HepG2 (cell line): ENCODE measurements at regions of chr11 and their contacts with region 1.

Region 1: GRCh38 chr11:118435893-118436624 is at the start of gene KMT2A:
- DNase-seq: peak; percentile 93
- ATAC-seq: peak; percentile 75
- H3K4me3 ChIP-seq: peak within 1 kb of the TSS; percentile 90 to 97 (median 92)
- H3K27ac ChIP-seq: peak within 1 kb of the TSS; percentile 87
- H3K4me1 ChIP-seq: peaks cover 53% of the 10 kb centered on the region
- H3K27me3 ChIP-seq: no peaks in the 10 kb centered on the region
- CTCF ChIP-seq: no peak
- EP300 ChIP-seq: peak in 1 of 2 experiments; percentile 26; a peak in 1 of 4 replicates
- POLR2A ChIP-seq: peak; percentile 14 to 83; a peak in 2 of 4 replicates
- RAD21 ChIP-seq: peak; percentile 48
- total RNA-seq, gene KMT2A: 20.0 and 26.2 TPM in 2 replicates

Region 2: GRCh38 chr11:118401151-118401878 is 34.7 kb before region 1 on chr11 and contains the start of gene ATP5MG:
- CTCF ChIA-PET with region 1: no interaction called
- POLR2A ChIA-PET with region 1: interaction called, 20 read pairs
- in situ Hi-C with region 1: no loop called
- intact Hi-C with region 1: loop called (anchors 2 kb)
- DNase-seq: peak; percentile 82
- ATAC-seq: peak; percentile 83
- H3K4me3 ChIP-seq: peak within 1 kb of the TSS; percentile 91 to 97 (median 95)
- H3K27ac ChIP-seq: peak within 1 kb of the TSS; percentile 90
- H3K4me1 ChIP-seq: peaks cover 40% of the 10 kb centered on the region
- H3K27me3 ChIP-seq: no peaks in the 10 kb centered on the region; a peak in 1 of 5 replicates
- CTCF ChIP-seq: peak; percentile 16; the same call in 1 of the 2 replicates
- EP300 ChIP-seq: no peak
- POLR2A ChIP-seq: peak; percentile 75 to 76
- RAD21 ChIP-seq: no peak
- total RNA-seq, gene ATP5MG: 320 and 408 TPM in 2 replicates

Region 3: GRCh38 chr11:118476676-118477075 is 40.6 kb after region 1 on chr11:
- CTCF ChIA-PET with region 1: no interaction called
- POLR2A ChIA-PET with region 1: no interaction called
- in situ Hi-C with region 1: no loop called
- intact Hi-C with region 1: no loop called
- DNase-seq: no peak
- ATAC-seq: no peak
- H3K4me3 ChIP-seq: no peak overlapping the region
- H3K27ac ChIP-seq: no peak overlapping the region
- H3K4me1 ChIP-seq: no peaks in the 10 kb centered on the region
- H3K27me3 ChIP-seq: no peaks in the 10 kb centered on the region
- CTCF ChIP-seq: no peak
- EP300 ChIP-seq: no peak
- POLR2A ChIP-seq: no peak
- RAD21 ChIP-seq: no peak